MCF 10A (cell line): ENCODE measurements at regions of chr1 and their contacts with region 1.

Region 1: GRCh38 chr1:189237008-189237407 is 1240.7 kb downstream of the BRINP3 start:
- DNase-seq: no peak
- H3K4me3 Mint-ChIP-seq: no peak overlapping the region
- H3K27ac Mint-ChIP-seq: no peak overlapping the region
- H3K4me1 Mint-ChIP-seq: no peaks in the 10 kb centered on the region
- H3K27me3 Mint-ChIP-seq: no peaks in the 10 kb centered on the region
- CTCF ChIP-seq: no peak

Region 2: GRCh38 chr1:189336115-189337100 is 99.4 kb after region 1 on chr1:
- CTCF ChIA-PET with region 1: no interaction called
- POLR2A ChIA-PET with region 1: no interaction called
- intact Hi-C with region 1: no loop called
- DNase-seq: no peak
- H3K4me3 Mint-ChIP-seq: no peak overlapping the region
- H3K27ac Mint-ChIP-seq: no peak overlapping the region
- H3K4me1 Mint-ChIP-seq: no peaks in the 10 kb centered on the region
- H3K27me3 Mint-ChIP-seq: no peaks in the 10 kb centered on the region
- CTCF ChIP-seq: no peak

Region 3: GRCh38 chr1:189719744-189720143 is 482.7 kb after region 1 on chr1:
- CTCF ChIA-PET with region 1: no interaction called
- POLR2A ChIA-PET with region 1: no interaction called
- intact Hi-C with region 1: loop called (anchors 5 kb)
- DNase-seq: no peak
- H3K4me3 Mint-ChIP-seq: no peak overlapping the region
- H3K27ac Mint-ChIP-seq: no peak overlapping the region
- H3K4me1 Mint-ChIP-seq: no peaks in the 10 kb centered on the region
- H3K27me3 Mint-ChIP-seq: no peaks in the 10 kb centered on the region
- CTCF ChIP-seq: no peak